Activated CD4-positive, alpha-beta T cell treated with anti-CD3 and anti-CD28 coated beads, Interleukin-2, amount 10 ng/mL, durations not matched to agents 24 days and 14 days (primary cell): ENCODE measurements at regions of chr5 and their contacts with region 1.

Region 1: GRCh38 chr5:56814963-56815658 is at the start of gene MAP3K1:
- DNase-seq: peak; percentile 94
- H3K4me3 Mint-ChIP-seq: peak within 1 kb of the TSS; percentile 91
- H3K27ac Mint-ChIP-seq: peak within 1 kb of the TSS; percentile 92
- H3K4me1 Mint-ChIP-seq: peaks cover 43% of the 10 kb centered on the region
- H3K27me3 Mint-ChIP-seq: peaks cover 3% of the 10 kb centered on the region
- total RNA-seq, gene MAP3K1: 27.6 and 27.9 TPM in 2 replicates

Region 2: GRCh38 chr5:56270568-56271392 is 544.3 kb before region 1 on chr5:
- intact Hi-C with region 1: loop called (anchors 1 kb)
- DNase-seq: peak; percentile 92
- H3K4me3 Mint-ChIP-seq: peak overlapping the region; percentile 27
- H3K27ac Mint-ChIP-seq: peak overlapping the region; percentile 20
- H3K4me1 Mint-ChIP-seq: peaks cover 27% of the 10 kb centered on the region
- H3K27me3 Mint-ChIP-seq: no peaks in the 10 kb centered on the region

Region 3: GRCh38 chr5:56610093-56610698 is 204.9 kb before region 1 on chr5:
- intact Hi-C with region 1: loop called (anchors 5 kb)
- DNase-seq: peak; percentile 79
- H3K4me3 Mint-ChIP-seq: peak overlapping the region; percentile 50
- H3K27ac Mint-ChIP-seq: peak overlapping the region; percentile 80
- H3K4me1 Mint-ChIP-seq: peaks cover 79% of the 10 kb centered on the region
- H3K27me3 Mint-ChIP-seq: no peaks in the 10 kb centered on the region

Region 4: DNA sequence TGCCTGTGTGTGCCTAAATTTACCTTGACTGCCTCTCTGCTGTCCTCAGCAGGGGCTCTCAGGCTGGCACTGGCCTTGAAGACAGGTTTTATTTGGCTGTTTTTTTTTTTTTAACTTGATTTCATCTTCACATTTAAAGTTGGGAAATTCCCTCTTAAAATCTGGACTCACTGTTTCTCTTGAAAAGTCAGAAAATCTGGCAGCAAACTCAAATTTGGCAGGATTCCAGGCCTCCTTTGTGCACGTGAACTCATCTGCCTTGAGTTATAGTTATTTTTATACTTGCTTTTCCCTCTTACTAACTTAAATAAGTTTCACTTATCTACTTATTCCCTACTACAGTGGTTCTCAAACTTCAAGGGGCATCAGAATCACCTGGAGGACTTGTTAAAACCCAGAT is 118.2 kb before region 1 on chr5:
- intact Hi-C with region 1: loop called (anchors 2 kb)
- DNase-seq: no peak
- H3K4me3 Mint-ChIP-seq: no peak overlapping the region
- H3K27ac Mint-ChIP-seq: no peak overlapping the region
- H3K4me1 Mint-ChIP-seq: peaks cover 77% of the 10 kb centered on the region
- H3K27me3 Mint-ChIP-seq: no peaks in the 10 kb centered on the region

Region 5: DNA sequence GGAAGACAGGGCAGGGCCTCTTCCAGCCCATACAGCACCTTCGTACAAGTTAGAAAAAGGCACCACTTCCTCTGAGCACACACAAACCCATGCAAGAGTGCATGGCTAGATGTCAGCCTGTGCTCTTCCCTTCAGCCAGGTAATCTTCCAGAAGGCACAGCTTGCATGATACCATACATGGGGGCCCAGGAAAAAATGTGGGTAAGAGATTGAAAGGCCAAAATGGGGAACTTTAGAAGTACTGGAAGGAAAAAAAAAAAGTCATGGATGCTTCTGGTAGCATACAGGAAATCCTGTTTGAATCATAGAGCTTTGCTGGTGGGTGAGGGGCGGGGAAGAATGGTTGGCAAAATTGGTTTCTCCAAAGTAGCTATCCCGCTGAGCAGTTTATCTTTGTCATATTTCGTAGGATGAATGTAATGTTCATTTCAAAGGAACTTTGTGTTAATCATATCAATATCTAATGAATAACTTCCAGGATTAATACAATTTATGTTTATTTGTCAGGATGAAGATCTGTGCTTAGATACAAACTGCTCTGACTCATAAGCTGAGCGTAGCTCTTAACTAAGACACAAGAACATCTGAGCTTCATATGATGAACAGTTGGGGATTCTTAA is 78.0 kb before region 1 on chr5:
- intact Hi-C with region 1: loop called (anchors 5 kb)
- DNase-seq: peak; percentile 60
- H3K4me3 Mint-ChIP-seq: peak overlapping the region; percentile 32
- H3K27ac Mint-ChIP-seq: peak overlapping the region; percentile 81
- H3K4me1 Mint-ChIP-seq: peaks cover 37% of the 10 kb centered on the region
- H3K27me3 Mint-ChIP-seq: no peaks in the 10 kb centered on the region

Region 6: GRCh38 chr5:56909294-56910209 is 94.4 kb after region 1 on chr5 and contains the start of gene SETD9:
- intact Hi-C with region 1: loop called (anchors 2 kb)
- DNase-seq: peak; percentile 98
- H3K4me3 Mint-ChIP-seq: peak within 1 kb of the TSS; percentile 92
- H3K27ac Mint-ChIP-seq: peak within 1 kb of the TSS; percentile 98
- H3K4me1 Mint-ChIP-seq: peaks cover 21% of the 10 kb centered on the region
- H3K27me3 Mint-ChIP-seq: peaks cover 18% of the 10 kb centered on the region
- total RNA-seq, gene SETD9: 15.9 and 17.0 TPM in 2 replicates

Region 7: GRCh38 chr5:57482671-57483106 is 667.6 kb after region 1 on chr5 and contains the start of gene ACTBL2:
- intact Hi-C with region 1: no loop called
- DNase-seq: no peak
- H3K4me3 Mint-ChIP-seq: no peak within 1 kb of the TSS
- H3K27ac Mint-ChIP-seq: no peak within 1 kb of the TSS
- H3K4me1 Mint-ChIP-seq: no peaks in the 10 kb centered on the region
- H3K27me3 Mint-ChIP-seq: peaks cover 10% of the 10 kb centered on the region
- total RNA-seq, gene ACTBL2: not detected in 2 replicates